ENCODE measurements at regions of chr4 and their contacts with region 1.

Region 1: GRCh38 chr4:121182296-121182695 is 18.2 kb upstream of the TNIP3 start:
- DNase-seq: peak in 6 of 14 experiments; percentile 11 to 87 (median 51)
- ATAC-seq: peak; percentile 83
- H3K4me3 ChIP-seq: peak overlapping the region; percentile 55
- H3K4me3 Mint-ChIP-seq: peak overlapping the region; percentile 87
- H3K27ac ChIP-seq: peak overlapping the region; percentile 76 to 94
- H3K27ac Mint-ChIP-seq: peak overlapping the region; percentile 95
- H3K4me1 ChIP-seq: peaks cover 52% of the 10 kb centered on the region
- H3K4me1 Mint-ChIP-seq: peaks cover 85% of the 10 kb centered on the region
- H3K27me3 ChIP-seq: no peaks in the 10 kb centered on the region
- H3K27me3 Mint-ChIP-seq: no peaks in the 10 kb centered on the region
- CTCF ChIP-seq: no peak

Region 2: GRCh38 chr4:121156822-121157769 is 25.2 kb before region 1 on chr4:
- CTCF ChIA-PET with region 1: no interaction called
- POLR2A ChIA-PET with region 1: interaction called, 6 read pairs
- intact Hi-C with region 1: loop called in 1 of 2 experiments (anchors 2 kb)
- DNase-seq: peak in 9 of 14 experiments; percentile 8 to 60 (median 32)
- ATAC-seq: peak; percentile 30
- H3K4me3 ChIP-seq: peak overlapping the region; percentile 64
- H3K4me3 Mint-ChIP-seq: peak overlapping the region; percentile 88
- H3K27ac ChIP-seq: peak overlapping the region; percentile 10
- H3K27ac Mint-ChIP-seq: peak overlapping the region; percentile 82
- H3K4me1 ChIP-seq: peaks cover 38% of the 10 kb centered on the region
- H3K4me1 Mint-ChIP-seq: peaks cover 68% of the 10 kb centered on the region
- H3K27me3 ChIP-seq: no peaks in the 10 kb centered on the region
- H3K27me3 Mint-ChIP-seq: no peaks in the 10 kb centered on the region
- CTCF ChIP-seq: no peak

Region 3: GRCh38 chr4:121165206-121165605 is 17.1 kb before region 1 on chr4:
- CTCF ChIA-PET with region 1: interaction called, 3 read pairs
- POLR2A ChIA-PET with region 1: interaction called, 5 read pairs
- intact Hi-C with region 1: loop called in 1 of 2 experiments (anchors 2 kb)
- DNase-seq: no peak
- ATAC-seq: no peak
- H3K4me3 ChIP-seq: no peak overlapping the region
- H3K4me3 Mint-ChIP-seq: peak overlapping the region; percentile 62
- H3K27ac ChIP-seq: peak overlapping the region; percentile 16 to 39
- H3K27ac Mint-ChIP-seq: peak overlapping the region; percentile 56
- H3K4me1 ChIP-seq: peaks cover 9% of the 10 kb centered on the region
- H3K4me1 Mint-ChIP-seq: peaks cover 65% of the 10 kb centered on the region
- H3K27me3 ChIP-seq: no peaks in the 10 kb centered on the region
- H3K27me3 Mint-ChIP-seq: no peaks in the 10 kb centered on the region
- CTCF ChIP-seq: no peak

Region 4: GRCh38 chr4:122479935-122480416 is 1297.7 kb after region 1 on chr4:
- CTCF ChIA-PET with region 1: no interaction called
- POLR2A ChIA-PET with region 1: no interaction called
- intact Hi-C with region 1: no loop called
- DNase-seq: no peak
- ATAC-seq: no peak
- H3K4me3 ChIP-seq: no peak overlapping the region
- H3K4me3 Mint-ChIP-seq: no peak overlapping the region
- H3K27ac ChIP-seq: no peak overlapping the region
- H3K27ac Mint-ChIP-seq: no peak overlapping the region
- H3K4me1 ChIP-seq: no peaks in the 10 kb centered on the region
- H3K4me1 Mint-ChIP-seq: no peaks in the 10 kb centered on the region
- H3K27me3 ChIP-seq: no peaks in the 10 kb centered on the region
- H3K27me3 Mint-ChIP-seq: no peaks in the 10 kb centered on the region
- CTCF ChIP-seq: no peak

Measured in CD4-positive, alpha-beta T cell (primary cell).